ENCODE measurements at regions of chr12 and their contacts with region 1.

Region 1: DNA sequence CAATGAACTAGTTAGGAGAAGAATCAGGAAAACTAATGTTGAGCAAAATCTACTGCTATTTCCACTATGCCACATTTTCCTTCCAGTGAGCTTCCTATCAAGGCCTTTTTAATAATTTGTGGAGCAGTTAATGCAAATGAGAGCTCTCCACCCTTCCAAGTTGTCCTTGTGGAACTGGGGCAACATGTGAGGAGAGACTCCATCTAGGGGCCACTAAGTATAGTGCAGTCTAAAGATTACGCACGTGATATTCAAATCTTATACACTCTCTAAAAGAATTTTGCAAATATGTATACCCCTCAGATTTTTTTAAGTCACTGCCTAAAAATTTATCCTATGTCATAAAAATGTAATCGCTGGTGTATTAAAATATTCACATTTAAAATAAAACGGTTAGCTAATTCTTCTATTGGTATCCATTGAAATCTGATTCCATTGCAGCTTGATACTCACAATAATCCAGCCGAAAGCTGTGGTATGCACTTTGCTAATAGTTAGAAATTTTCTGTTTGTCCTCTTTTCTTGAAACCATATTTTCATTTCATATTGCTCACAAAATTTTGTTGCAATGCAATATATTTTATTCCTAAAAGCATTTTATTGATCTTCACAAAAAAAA is 100.1 kb downstream of the PAH start:
- DNase-seq: no peak
- ATAC-seq: peak; percentile 76
- H3K4me3 ChIP-seq: no peak overlapping the region
- H3K27ac ChIP-seq: no peak overlapping the region
- H3K4me1 ChIP-seq: no peaks in the 10 kb centered on the region
- H3K27me3 ChIP-seq: no peaks in the 10 kb centered on the region; a peak in 1 of 4 replicates
- CTCF ChIP-seq: peak; percentile 53 to 61 (median 60)
- EP300 ChIP-seq: no peak
- POLR2A ChIP-seq: no peak
- RAD21 ChIP-seq: peak; percentile 49

Region 2: GRCh38 chr12:102364709-102365108 is 452.2 kb before region 1 on chr12:
- CTCF ChIA-PET with region 1: no interaction called
- POLR2A ChIA-PET with region 1: interaction called, 10 read pairs
- RAD21 ChIA-PET with region 1: no interaction called
- SMC1A ChIA-PET with region 1: no interaction called
- in situ Hi-C with region 1: no loop called
- intact Hi-C with region 1: no loop called
- DNase-seq: no peak
- ATAC-seq: no peak
- H3K4me3 ChIP-seq: no peak overlapping the region
- H3K27ac ChIP-seq: no peak overlapping the region
- H3K4me1 ChIP-seq: no peaks in the 10 kb centered on the region
- H3K27me3 ChIP-seq: no peaks in the 10 kb centered on the region
- CTCF ChIP-seq: no peak
- EP300 ChIP-seq: no peak
- POLR2A ChIP-seq: no peak
- RAD21 ChIP-seq: no peak

Region 3: GRCh38 chr12:102781117-102781516 is 35.8 kb before region 1 on chr12:
- CTCF ChIA-PET with region 1: interaction called, 24 read pairs
- POLR2A ChIA-PET with region 1: no interaction called
- RAD21 ChIA-PET with region 1: no interaction called
- SMC1A ChIA-PET with region 1: interaction called, 9 read pairs
- in situ Hi-C with region 1: no loop called
- intact Hi-C with region 1: no loop called
- DNase-seq: no peak
- ATAC-seq: no peak
- H3K4me3 ChIP-seq: no peak overlapping the region
- H3K27ac ChIP-seq: no peak overlapping the region
- H3K4me1 ChIP-seq: no peaks in the 10 kb centered on the region
- H3K27me3 ChIP-seq: no peaks in the 10 kb centered on the region; a peak in 1 of 4 replicates
- CTCF ChIP-seq: no peak
- EP300 ChIP-seq: no peak
- POLR2A ChIP-seq: no peak
- RAD21 ChIP-seq: no peak

Region 4: GRCh38 chr12:102806110-102806509 is 10.8 kb before region 1 on chr12:
- CTCF ChIA-PET with region 1: interaction called, 16 read pairs
- POLR2A ChIA-PET with region 1: no interaction called
- RAD21 ChIA-PET with region 1: interaction called, 9 read pairs
- SMC1A ChIA-PET with region 1: interaction called, 3 read pairs
- in situ Hi-C with region 1: no loop called
- intact Hi-C with region 1: no loop called
- DNase-seq: no peak
- ATAC-seq: no peak
- H3K4me3 ChIP-seq: no peak overlapping the region
- H3K27ac ChIP-seq: no peak overlapping the region
- H3K4me1 ChIP-seq: no peaks in the 10 kb centered on the region
- H3K27me3 ChIP-seq: no peaks in the 10 kb centered on the region
- CTCF ChIP-seq: no peak
- EP300 ChIP-seq: no peak
- POLR2A ChIP-seq: no peak
- RAD21 ChIP-seq: no peak

Region 5: DNA sequence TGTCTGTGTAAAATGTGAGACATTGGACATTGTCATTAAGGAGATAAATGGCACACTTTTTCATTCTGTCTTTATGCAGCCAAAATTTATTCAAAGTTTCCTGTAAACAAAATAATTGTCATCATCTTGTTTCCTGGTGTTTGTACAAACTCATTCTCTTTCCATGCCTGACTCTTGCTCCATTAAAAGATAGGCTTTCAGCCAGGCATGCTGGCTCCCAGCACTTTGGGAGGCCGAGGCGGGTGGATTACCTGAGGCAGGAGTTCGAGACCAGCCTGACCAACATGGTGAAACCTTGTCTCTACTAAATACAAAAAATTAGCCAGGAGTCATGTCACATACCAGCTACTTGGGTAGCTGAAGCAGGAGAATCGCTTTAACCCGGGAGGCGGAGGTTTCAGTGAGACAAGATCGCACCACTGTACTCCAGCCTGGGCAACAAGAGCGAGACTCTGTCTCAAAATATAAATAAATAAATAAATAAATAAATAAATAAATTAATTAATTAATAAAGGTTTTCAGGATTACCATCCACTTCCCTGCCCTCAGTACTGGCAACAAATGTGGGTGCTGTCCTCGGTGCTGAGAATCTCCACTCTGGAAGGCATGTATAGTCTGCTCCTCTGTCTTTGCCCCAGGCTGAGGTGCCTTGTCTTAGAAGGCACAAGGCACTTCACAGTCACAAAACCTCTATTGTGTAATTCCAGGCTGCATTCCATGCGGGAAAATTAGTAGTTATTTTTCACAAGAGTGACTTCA is 16.9 kb after region 1 on chr12:
- CTCF ChIA-PET with region 1: interaction called, 19 read pairs
- POLR2A ChIA-PET with region 1: no interaction called
- RAD21 ChIA-PET with region 1: no interaction called
- SMC1A ChIA-PET with region 1: interaction called, 3 read pairs
- in situ Hi-C with region 1: no loop called
- intact Hi-C with region 1: no loop called
- DNase-seq: no peak
- ATAC-seq: no peak
- H3K4me3 ChIP-seq: no peak overlapping the region
- H3K27ac ChIP-seq: no peak overlapping the region
- H3K4me1 ChIP-seq: no peaks in the 10 kb centered on the region
- H3K27me3 ChIP-seq: no peaks in the 10 kb centered on the region
- CTCF ChIP-seq: no peak
- EP300 ChIP-seq: no peak
- POLR2A ChIP-seq: no peak
- RAD21 ChIP-seq: no peak